Testis (tissue), 5 donors: ENCODE measurements at regions of chr2 and their contacts with region 1.

Region 1: DNA sequence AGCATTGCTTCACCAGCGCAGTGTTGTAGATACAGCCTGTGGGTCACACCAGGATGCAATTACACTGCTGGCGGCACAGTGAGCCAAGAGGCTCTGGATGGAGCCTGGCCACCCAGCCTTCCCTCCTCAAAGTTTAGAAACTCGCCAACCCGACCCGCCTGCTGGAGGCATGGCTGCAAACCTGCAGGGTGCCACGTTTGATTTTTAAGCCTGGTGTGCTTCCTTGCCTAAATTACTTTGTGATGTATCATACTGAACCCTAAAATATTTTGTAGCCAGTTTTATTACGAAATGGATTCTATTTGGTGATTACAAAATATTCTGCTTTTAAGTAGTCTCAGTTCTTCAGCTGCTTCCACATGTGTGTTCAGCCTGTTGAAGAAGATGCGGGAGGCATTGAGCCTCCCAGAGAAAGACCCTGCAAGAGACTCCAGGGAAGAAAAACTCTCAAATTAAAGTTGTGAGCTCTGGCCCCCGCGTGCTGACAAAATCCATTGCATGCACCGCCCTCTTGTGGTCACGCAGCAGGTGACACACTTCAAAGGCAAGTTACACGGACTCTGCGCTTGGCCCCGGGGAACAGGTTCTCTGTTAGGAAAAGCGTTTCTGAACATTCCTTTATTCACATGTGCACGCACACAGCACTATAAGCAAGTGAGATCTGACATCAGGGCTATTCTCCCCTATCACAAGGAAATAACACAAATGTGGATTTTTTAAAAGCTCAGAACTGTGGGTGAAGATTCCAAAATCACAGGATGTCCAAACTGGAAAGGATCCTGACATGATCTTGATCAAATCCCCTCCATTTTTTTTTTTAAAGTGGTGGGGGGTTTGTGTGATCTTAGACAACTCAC is 63.0 kb upstream of the TWIST2 start:
- DNase-seq: peak; percentile 85
- H3K4me3 ChIP-seq: no peak overlapping the region
- H3K27ac ChIP-seq: no peak overlapping the region
- H3K4me1 ChIP-seq: no peaks in the 10 kb centered on the region
- H3K27me3 ChIP-seq: no peaks in the 10 kb centered on the region
- CTCF ChIP-seq: peak; percentile 86 to 87 (median 87)
- POLR2A ChIP-seq: no peak

Region 2: GRCh38 chr2:238288650-238289573 is 496.0 kb before region 1 on chr2:
- intact Hi-C with region 1: no loop called
- DNase-seq: peak; percentile 100
- H3K4me3 ChIP-seq: peak overlapping the region; percentile 87 to 91
- H3K27ac ChIP-seq: peak overlapping the region; percentile 36 to 96
- H3K4me1 ChIP-seq: peaks cover 47% of the 10 kb centered on the region
- H3K27me3 ChIP-seq: no peaks in the 10 kb centered on the region
- CTCF ChIP-seq: peak; percentile 23 to 62 (median 36)
- POLR2A ChIP-seq: no peak

Region 3: GRCh38 chr2:238352361-238352760 is 432.5 kb before region 1 on chr2:
- intact Hi-C with region 1: loop called (anchors 10 kb)
- DNase-seq: no peak
- H3K4me3 ChIP-seq: no peak overlapping the region
- H3K27ac ChIP-seq: no peak overlapping the region
- H3K4me1 ChIP-seq: no peaks in the 10 kb centered on the region
- H3K27me3 ChIP-seq: no peaks in the 10 kb centered on the region
- CTCF ChIP-seq: no peak
- POLR2A ChIP-seq: no peak